Panc1 (cell line): ENCODE measurements at regions of chr18 and their contacts with region 1.

Region 1: GRCh38 chr18:62714671-62715435 is 488 bp upstream of the PHLPP1 start:
- DNase-seq: peak; percentile 95
- ATAC-seq: peak; percentile 93
- H3K4me3 ChIP-seq: peak overlapping the region; percentile 55 to 59
- H3K27ac ChIP-seq: peak overlapping the region; percentile 83
- H3K4me1 ChIP-seq: peaks cover 6% of the 10 kb centered on the region; the same call in 1 of the 2 replicates
- H3K27me3 ChIP-seq: no peaks in the 10 kb centered on the region
- CTCF ChIP-seq: peak; percentile 77

Region 2: DNA sequence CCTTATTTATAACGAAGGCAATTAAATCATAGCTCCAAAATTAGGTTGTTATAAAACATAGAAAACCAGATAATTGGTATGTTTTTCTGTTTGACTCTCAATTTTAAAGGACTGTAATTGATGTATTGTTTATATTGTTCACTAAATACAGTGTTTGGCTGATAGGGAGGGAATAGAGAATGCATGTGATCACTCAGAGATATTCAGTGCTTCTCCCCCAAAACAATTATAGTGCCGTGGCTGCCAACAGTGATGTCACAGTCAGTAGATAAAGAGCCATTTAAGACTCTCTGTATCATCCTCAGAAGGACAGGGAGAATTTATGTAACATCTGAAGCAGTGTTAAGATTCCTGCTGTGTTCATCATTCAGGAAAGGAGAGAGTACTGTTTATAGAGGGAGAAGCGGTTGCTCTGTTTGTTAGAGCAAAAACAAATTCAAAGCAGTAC is 70.1 kb after region 1 on chr18:
- CTCF ChIA-PET with region 1: no interaction called
- POLR2A ChIA-PET with region 1: no interaction called
- in situ Hi-C with region 1: no loop called
- intact Hi-C with region 1: no loop called
- DNase-seq: no peak
- ATAC-seq: no peak
- H3K4me3 ChIP-seq: no peak overlapping the region
- H3K27ac ChIP-seq: no peak overlapping the region
- H3K4me1 ChIP-seq: no peaks in the 10 kb centered on the region
- H3K27me3 ChIP-seq: no peaks in the 10 kb centered on the region
- CTCF ChIP-seq: no peak

Region 3: DNA sequence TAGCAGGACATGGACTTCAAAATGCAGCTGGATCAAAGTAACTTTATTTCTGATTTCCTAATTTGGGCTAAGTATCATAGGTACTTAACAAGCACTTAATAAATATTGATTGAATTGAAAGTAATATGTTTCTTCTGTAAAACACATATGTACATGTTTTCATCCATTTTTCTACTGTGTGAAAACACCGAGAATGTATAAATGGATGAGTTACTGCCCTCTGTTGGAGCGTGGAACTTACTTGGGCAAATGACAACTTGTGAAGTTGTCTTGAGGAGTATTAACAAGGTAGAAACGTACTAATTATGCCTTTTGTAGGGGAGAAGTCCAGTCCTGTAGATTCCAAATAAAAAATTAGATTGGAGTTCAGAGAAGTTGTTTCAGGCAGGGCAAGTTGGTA is 87.7 kb after region 1 on chr18:
- CTCF ChIA-PET with region 1: no interaction called
- POLR2A ChIA-PET with region 1: no interaction called
- in situ Hi-C with region 1: no loop called
- intact Hi-C with region 1: loop called (anchors 5 kb)
- DNase-seq: no peak
- ATAC-seq: no peak
- H3K4me3 ChIP-seq: no peak overlapping the region
- H3K27ac ChIP-seq: no peak overlapping the region
- H3K4me1 ChIP-seq: no peaks in the 10 kb centered on the region; the same call in 1 of the 2 replicates
- H3K27me3 ChIP-seq: no peaks in the 10 kb centered on the region
- CTCF ChIP-seq: peak; percentile 18; the same call in 1 of the 2 replicates

Region 4: DNA sequence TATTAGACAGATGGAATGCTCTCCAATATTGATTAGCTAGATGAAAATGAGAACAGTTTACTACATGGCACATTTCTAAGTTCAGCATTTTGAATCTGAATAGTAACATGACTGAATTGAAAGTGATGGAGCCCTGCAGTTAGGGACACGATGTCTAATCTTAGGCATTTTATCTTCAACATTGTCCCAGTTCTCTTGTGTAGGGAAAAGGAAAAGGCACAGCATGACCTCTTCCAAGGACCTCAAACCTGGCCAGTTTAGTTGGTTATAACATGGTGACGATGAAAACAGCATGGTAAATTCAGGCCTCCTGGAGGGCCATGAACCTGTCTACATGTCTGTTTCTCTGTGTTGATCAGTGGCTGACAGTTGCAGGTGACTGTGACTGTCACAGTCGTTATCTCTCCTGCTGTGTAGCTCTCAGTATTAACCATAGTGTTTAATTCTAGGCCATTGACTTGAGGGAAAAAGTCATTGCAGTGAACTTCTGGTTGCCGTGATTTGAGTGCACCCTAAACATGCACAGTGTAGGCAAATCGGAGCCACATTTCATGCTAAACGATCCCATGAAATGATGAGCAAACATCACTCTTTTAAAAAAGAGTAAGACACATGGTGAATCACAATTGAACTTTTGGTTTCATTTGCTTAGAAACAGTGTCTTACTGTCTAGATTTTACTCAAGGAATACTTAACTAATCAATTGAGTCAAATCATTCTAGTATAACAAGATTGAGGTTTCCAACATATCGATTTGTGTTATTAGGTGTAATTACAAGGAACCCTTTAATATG is 130.2 kb after region 1 on chr18:
- CTCF ChIA-PET with region 1: no interaction called
- POLR2A ChIA-PET with region 1: no interaction called
- in situ Hi-C with region 1: no loop called
- intact Hi-C with region 1: no loop called
- DNase-seq: no peak
- ATAC-seq: no peak
- H3K4me3 ChIP-seq: no peak overlapping the region
- H3K27ac ChIP-seq: no peak overlapping the region
- H3K4me1 ChIP-seq: no peaks in the 10 kb centered on the region
- H3K27me3 ChIP-seq: no peaks in the 10 kb centered on the region
- CTCF ChIP-seq: no peak

Region 5: DNA sequence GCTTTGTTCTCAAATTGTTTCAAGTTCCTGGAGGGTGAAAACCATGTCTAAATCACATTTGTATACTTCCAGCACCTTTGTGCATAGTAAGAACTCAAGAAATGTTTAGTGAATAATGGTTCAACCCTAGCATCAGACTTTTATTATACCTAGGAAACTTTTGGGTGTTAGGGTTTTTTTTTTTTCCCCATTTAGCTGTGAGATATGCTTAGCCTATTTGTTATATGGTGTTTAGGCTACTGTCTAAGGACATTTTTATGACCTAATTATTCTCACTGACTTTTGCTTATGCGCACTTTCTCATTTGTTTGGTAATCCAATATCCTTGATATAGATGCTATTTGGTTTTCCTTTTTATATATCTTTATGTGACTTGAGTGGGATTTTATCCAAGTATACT is 165.2 kb after region 1 on chr18:
- CTCF ChIA-PET with region 1: interaction called, 10 read pairs
- POLR2A ChIA-PET with region 1: no interaction called
- in situ Hi-C with region 1: no loop called
- intact Hi-C with region 1: no loop called
- DNase-seq: no peak
- ATAC-seq: no peak
- H3K4me3 ChIP-seq: no peak overlapping the region
- H3K27ac ChIP-seq: no peak overlapping the region
- H3K4me1 ChIP-seq: peaks cover 3% of the 10 kb centered on the region; the same call in 1 of the 2 replicates
- H3K27me3 ChIP-seq: no peaks in the 10 kb centered on the region
- CTCF ChIP-seq: no peak

Region 6: DNA sequence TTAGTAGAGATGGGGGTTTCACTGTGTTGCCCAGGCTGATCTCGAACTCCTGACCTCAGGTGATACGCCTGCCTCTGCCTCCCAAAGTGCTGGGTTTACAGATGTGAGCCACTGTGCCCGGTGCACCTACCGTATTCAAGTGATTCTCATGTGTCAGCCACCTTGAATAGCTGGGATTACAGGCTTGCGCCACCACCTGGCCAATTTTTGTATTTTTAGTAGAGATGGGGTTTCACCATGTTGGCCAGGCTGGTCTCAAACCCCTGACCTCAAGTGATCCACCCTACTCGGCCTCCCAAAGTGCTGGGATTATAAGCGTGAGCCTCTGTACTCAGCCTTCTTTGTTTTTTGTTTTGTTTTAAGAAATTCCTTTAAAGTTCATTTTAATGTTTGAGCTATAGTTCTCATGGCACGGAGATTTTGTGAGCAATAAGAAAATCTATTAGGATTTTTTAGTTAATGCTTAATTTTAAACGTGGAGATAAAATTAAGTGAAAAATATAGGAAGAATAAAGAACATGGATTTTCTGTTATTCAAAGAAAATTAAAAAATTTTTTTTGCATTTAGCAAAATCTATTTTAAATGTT is 243.1 kb after region 1 on chr18:
- CTCF ChIA-PET with region 1: no interaction called
- POLR2A ChIA-PET with region 1: no interaction called
- in situ Hi-C with region 1: no loop called
- intact Hi-C with region 1: loop called (anchors 2 kb)
- DNase-seq: no peak
- ATAC-seq: peak; percentile 90
- H3K4me3 ChIP-seq: no peak overlapping the region
- H3K27ac ChIP-seq: no peak overlapping the region
- H3K4me1 ChIP-seq: no peaks in the 10 kb centered on the region
- H3K27me3 ChIP-seq: no peaks in the 10 kb centered on the region
- CTCF ChIP-seq: peak; percentile 68

Region 7: DNA sequence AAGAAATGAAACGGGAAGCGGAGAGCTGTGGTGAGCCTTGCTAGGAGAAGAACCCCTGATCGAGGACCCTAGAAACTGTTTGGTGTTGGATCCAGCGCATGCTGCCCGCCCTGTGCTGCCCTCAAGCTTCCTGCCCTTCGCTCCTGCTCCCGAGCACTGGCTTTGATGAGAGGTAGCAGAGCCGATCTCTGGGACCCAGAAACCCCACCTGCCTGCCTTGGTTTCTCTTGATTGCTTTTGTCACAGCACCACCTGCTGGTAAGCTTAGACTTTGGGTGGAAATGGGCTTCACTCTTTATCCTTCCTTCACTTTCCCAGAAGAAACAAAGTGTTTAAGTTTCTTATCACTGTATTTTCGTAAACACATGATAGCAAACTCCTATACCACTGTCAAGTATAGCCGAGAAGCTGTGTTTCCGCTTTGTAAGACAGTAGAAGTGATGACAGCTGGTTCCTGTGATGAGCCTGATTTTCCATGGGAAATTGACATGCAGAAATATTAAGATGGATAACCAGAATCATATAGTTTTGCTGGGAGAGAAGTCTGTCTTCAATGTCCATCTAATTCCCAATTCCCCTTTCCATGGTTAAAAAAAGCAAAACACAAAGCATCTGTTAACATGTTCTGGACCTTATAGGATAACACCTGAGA is 267.9 kb after region 1 on chr18:
- CTCF ChIA-PET with region 1: interaction called, 4 read pairs
- POLR2A ChIA-PET with region 1: no interaction called
- in situ Hi-C with region 1: no loop called
- intact Hi-C with region 1: loop called (anchors 1 kb)
- DNase-seq: peak; percentile 35
- ATAC-seq: peak; percentile 66
- H3K4me3 ChIP-seq: no peak overlapping the region
- H3K27ac ChIP-seq: no peak overlapping the region
- H3K4me1 ChIP-seq: no peaks in the 10 kb centered on the region
- H3K27me3 ChIP-seq: no peaks in the 10 kb centered on the region
- CTCF ChIP-seq: peak; percentile 65

Region 8: GRCh38 chr18:63079114-63079513 is 364.3 kb after region 1 on chr18:
- CTCF ChIA-PET with region 1: no interaction called
- POLR2A ChIA-PET with region 1: no interaction called
- in situ Hi-C with region 1: no loop called
- intact Hi-C with region 1: no loop called
- DNase-seq: no peak
- ATAC-seq: no peak
- H3K4me3 ChIP-seq: no peak overlapping the region
- H3K27ac ChIP-seq: no peak overlapping the region
- H3K4me1 ChIP-seq: no peaks in the 10 kb centered on the region
- H3K27me3 ChIP-seq: no peaks in the 10 kb centered on the region
- CTCF ChIP-seq: no peak